PC-9 (cell line): ENCODE measurements at regions of chr1 and their contacts with region 1.

Region 1: GRCh38 chr1:52693843-52694242 is 4.3 kb downstream of the COA7 start:
- DNase-seq: no peak
- H3K4me3 ChIP-seq: no peak overlapping the region
- H3K27ac ChIP-seq: no peak overlapping the region
- H3K4me1 ChIP-seq: peaks cover 9% of the 10 kb centered on the region
- H3K27me3 ChIP-seq: no peaks in the 10 kb centered on the region
- CTCF ChIP-seq: no peak

Region 2: DNA sequence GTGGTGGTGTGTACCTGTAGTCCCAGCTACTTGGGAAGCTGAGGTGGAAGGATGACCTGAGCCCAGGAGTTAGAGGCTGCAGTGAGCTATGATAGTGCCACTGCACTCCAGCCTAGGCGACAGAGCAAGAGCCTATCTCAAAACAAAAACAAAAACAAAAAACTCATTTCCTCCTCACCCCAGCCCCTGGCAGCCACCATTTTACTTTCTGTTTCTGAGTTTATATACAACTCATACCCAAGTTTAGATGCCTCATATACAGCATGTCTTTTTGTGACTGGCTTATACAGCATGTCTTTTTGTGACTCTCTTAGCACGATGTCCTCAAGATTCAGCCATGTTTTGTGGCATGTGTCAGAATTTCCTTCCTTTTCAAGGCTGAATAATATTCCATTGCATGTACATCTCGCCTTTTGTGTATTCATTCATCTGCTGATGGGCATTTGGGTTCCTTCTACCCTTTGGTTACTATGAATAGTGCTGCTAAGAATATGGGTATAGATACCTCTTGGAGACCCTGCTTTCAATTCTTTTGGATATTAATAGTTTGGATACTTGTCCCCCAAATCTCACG is 10.4 kb before region 1 on chr1:
- CTCF ChIA-PET with region 1: no interaction called
- POLR2A ChIA-PET with region 1: interaction called, 19 read pairs
- intact Hi-C with region 1: no loop called
- DNase-seq: no peak
- H3K4me3 ChIP-seq: no peak overlapping the region
- H3K27ac ChIP-seq: no peak overlapping the region
- H3K4me1 ChIP-seq: no peaks in the 10 kb centered on the region
- H3K27me3 ChIP-seq: no peaks in the 10 kb centered on the region
- CTCF ChIP-seq: no peak

Region 3: DNA sequence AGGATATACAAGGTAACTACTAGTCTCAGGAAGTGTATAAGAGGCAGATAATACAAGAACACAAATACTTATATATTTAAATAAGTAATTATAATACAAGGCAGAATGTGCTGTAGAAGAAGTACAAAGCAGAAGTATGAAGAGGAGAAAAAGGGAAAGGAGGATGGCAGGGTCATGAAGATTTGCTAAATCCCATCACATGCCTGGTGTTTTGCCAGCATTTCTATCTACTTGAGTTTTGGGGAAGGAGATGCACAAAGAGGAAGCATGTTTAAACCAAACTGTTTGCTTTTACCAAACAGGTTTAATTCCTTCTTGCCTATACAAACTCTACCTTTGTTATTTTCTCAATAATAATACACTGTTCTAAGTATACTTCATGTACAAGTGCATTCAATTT is 307.3 kb after region 1 on chr1:
- CTCF ChIA-PET with region 1: no interaction called
- POLR2A ChIA-PET with region 1: no interaction called
- intact Hi-C with region 1: no loop called
- DNase-seq: no peak
- H3K4me3 ChIP-seq: no peak overlapping the region
- H3K27ac ChIP-seq: no peak overlapping the region
- H3K4me1 ChIP-seq: no peaks in the 10 kb centered on the region
- H3K27me3 ChIP-seq: no peaks in the 10 kb centered on the region
- CTCF ChIP-seq: no peak

Region 4: GRCh38 chr1:53266106-53266505 is 572.3 kb after region 1 on chr1:
- CTCF ChIA-PET with region 1: interaction called, 13 read pairs
- POLR2A ChIA-PET with region 1: no interaction called
- intact Hi-C with region 1: no loop called
- DNase-seq: no peak
- H3K4me3 ChIP-seq: no peak overlapping the region
- H3K27ac ChIP-seq: no peak overlapping the region
- H3K4me1 ChIP-seq: no peaks in the 10 kb centered on the region
- H3K27me3 ChIP-seq: no peaks in the 10 kb centered on the region
- CTCF ChIP-seq: peak; percentile 44; the same call in 1 of the 2 replicates